H1 (cell line): ENCODE measurements at regions of chr1 and their contacts with region 1.

Region 1: GRCh38 chr1:151199873-151200584 is 1.7 kb downstream of the PIP5K1A start:
- DNase-seq: no peak
- H3K4me3 ChIP-seq: peak overlapping the region; percentile 74 to 99 (median 93)
- H3K27ac ChIP-seq: no peak overlapping the region
- H3K4me1 ChIP-seq: peaks cover 2 to 4% (median 3%) of the 10 kb centered on the region in 4 experiments; a peak in 3 of 7 replicates
- H3K27me3 ChIP-seq: no peaks in the 10 kb centered on the region
- CTCF ChIP-seq: no peak
- EP300 ChIP-seq: no peak
- POLR2A ChIP-seq: no peak
- RAD21 ChIP-seq: no peak

Region 2: DNA sequence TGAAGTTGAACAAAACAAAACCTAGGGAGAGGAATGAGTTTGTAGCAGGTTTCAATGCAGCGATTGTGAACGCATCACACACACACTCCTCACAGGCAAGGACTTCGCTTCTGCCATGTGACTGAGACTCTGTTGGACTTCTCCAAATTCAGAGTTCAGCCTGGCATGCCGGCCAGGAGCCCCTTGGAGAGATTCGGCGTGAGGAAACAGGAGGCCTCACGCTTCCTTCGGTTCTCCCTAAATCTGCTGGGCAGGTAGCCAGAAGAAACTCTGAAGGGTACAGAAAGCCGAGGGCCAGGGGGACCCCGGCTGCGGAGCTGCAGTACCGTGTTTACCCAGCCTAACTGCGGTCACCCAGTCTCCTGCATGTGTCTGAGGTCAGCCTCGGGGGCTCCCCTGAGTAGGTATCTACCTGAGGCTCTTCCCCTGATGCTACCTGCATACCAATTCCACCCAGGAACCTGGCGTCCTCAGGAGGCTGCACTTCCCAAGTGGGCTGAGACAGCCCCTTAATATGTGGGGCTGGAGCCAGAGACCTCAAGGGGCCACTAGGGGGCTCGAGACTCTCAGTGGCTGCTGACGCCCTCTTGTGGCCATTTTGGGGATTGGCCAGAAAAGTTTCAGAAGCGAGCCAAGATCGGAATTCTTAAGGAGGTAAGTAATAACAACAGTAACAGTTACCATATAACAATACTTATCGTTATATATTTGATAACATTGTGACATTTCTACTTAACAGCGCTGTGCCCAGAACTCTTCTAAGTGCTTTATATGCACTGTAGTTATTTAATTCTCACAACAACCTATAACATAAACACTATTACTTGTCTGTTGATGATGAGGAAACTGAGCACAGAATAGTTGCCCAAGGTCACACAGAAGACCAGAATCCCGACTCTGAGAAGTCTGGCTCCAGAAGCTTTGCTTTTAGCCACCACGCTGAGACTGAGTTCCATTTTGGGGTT is 220.7 kb before region 1 on chr1:
- CTCF ChIA-PET with region 1: no interaction called
- POLR2A ChIA-PET with region 1: no interaction called
- DNase-seq: peak; percentile 61 to 95
- H3K4me3 ChIP-seq: no peak overlapping the region; a peak in 1 of 8 replicates
- H3K27ac ChIP-seq: no peak overlapping the region
- H3K4me1 ChIP-seq: peaks cover 9 to 42% (median 33%) of the 10 kb centered on the region in 4 experiments
- H3K27me3 ChIP-seq: no peaks in the 10 kb centered on the region
- CTCF ChIP-seq: peak; percentile 99 to 100 (median 100)
- EP300 ChIP-seq: peak in 1 of 2 experiments; percentile 55; a peak in 1 of 3 replicates
- POLR2A ChIP-seq: no peak
- RAD21 ChIP-seq: peak; percentile 71 to 85

Region 3: GRCh38 chr1:151222130-151222529 is 22.1 kb after region 1 on chr1:
- CTCF ChIA-PET with region 1: interaction called, 5 read pairs
- POLR2A ChIA-PET with region 1: interaction called, 14 read pairs
- DNase-seq: no peak
- H3K4me3 ChIP-seq: no peak overlapping the region
- H3K27ac ChIP-seq: no peak overlapping the region
- H3K4me1 ChIP-seq: peaks cover 0 to 5% (median under 1%) of the 10 kb centered on the region in 4 experiments; a peak in 2 of 7 replicates
- H3K27me3 ChIP-seq: no peaks in the 10 kb centered on the region
- CTCF ChIP-seq: no peak
- EP300 ChIP-seq: no peak
- POLR2A ChIP-seq: no peak
- RAD21 ChIP-seq: no peak

Region 4: GRCh38 chr1:151292207-151293030 is 92.4 kb after region 1 on chr1:
- CTCF ChIA-PET with region 1: no interaction called
- POLR2A ChIA-PET with region 1: no interaction called
- DNase-seq: no peak
- H3K4me3 ChIP-seq: no peak overlapping the region
- H3K27ac ChIP-seq: no peak overlapping the region
- H3K4me1 ChIP-seq: peaks cover 6 to 21% (median 15%) of the 10 kb centered on the region in 4 experiments
- H3K27me3 ChIP-seq: no peaks in the 10 kb centered on the region
- CTCF ChIP-seq: peak; percentile 23 to 38 (median 28); a peak in 3 of 4 replicates
- EP300 ChIP-seq: no peak
- POLR2A ChIP-seq: peak; percentile 51 to 53
- RAD21 ChIP-seq: peak; percentile 6 to 27; a peak in 2 of 4 replicates